Psoas muscle (tissue), 8 donors: ENCODE measurements at regions of chrX and their contacts with region 1.

Region 1: DNA sequence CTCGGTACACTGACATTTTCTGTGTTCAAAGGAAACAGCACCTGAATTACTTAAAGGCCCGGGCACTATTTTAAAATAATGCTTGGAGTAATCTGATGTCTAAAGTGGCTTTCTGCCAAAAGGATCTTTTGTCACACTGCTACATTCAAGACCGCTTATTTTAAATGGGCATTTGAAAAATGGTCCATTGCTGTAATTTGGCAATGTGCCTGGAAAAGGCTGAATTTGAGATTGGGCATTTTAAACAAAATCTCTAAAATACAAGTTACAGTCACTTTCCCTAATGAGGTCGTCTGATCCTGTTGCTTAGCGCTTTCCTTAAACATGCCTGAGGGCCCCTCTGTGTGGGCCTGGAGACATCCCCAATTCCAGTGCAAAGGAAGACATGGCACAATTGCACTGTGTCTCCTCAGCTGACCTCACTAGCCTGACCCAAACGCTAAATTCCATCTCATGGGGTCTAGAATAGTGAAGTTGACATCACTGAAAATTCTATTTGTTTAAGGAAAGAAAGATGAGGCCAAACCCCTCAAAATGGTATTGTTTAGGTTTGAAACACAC is 214.2 kb downstream of the GPC3 start:
- DNase-seq: no peak
- ATAC-seq: no peak
- H3K4me3 ChIP-seq: no peak overlapping the region
- H3K27ac ChIP-seq: no peak overlapping the region
- H3K4me1 ChIP-seq: no peaks in the 10 kb centered on the region
- H3K27me3 ChIP-seq: peaks cover 0 to 4% (median 0%) of the 10 kb centered on the region in 3 donors
- CTCF ChIP-seq: no peak

Region 2: DNA sequence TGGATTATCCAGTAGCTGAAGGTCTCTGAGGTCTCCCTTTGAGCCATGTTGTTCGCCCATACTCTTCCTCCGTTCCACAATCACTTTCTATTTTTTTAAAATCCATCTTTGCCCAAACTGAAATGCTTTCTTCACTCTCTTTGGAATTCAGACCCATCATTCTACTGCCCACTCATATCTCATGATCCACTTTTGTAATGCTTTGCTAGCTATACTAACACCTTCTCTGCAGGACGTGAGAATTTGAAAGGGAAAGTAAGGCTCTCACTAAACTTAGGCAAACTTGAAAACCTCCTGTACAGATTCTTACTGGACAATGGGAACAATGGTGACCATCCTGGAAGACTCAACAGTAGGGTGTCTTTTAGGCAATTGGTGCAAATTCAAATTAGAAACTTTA is 1289.5 kb after region 1 on chrX:
- intact Hi-C with region 1: loop called in 1 of 2 experiments (anchors 5 kb)
- DNase-seq: no peak
- ATAC-seq: no peak
- H3K4me3 ChIP-seq: no peak overlapping the region
- H3K27ac ChIP-seq: no peak overlapping the region
- H3K4me1 ChIP-seq: no peaks in the 10 kb centered on the region
- H3K27me3 ChIP-seq: peaks cover 0 to 12% (median 0%) of the 10 kb centered on the region in 3 donors
- CTCF ChIP-seq: no peak